Posterior vena cava (tissue), 2 donors: ENCODE measurements at regions of chr1 and their contacts with region 1.

Region 1: DNA sequence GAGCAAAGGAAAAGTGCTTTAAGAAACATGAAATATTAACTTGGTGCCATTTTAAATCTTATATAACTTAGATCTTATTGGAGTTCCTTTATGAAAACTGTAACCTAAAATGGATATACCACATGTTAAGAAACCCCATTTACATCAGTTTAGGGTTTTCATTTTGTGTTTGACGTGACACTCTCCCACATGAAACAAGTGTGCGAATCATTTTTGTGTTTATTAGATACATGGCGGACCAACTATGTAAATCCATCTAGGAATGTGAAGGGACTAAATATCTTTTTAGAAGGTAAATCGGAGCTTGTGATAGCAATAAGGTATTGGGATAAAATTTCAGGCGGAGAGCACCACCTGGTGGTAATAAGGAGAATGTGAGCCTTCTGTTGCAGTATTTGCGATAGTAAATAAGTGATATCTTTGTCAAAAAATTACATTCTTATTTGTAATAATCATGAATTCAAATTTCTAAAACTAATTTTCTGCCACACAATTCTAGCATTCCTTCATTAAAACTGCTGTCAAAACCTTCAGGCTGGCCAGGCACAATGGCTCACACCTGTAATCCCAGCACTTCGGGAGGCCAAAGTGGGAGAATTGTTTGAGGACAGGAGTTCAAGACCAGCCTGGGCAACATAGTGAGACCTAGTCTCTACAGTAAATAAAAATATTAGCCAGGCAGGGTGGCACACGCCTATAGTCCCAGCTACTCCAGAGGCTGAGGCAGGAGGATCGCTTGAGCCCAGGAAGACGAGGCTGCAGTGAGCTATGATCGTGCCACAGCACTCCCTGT is 31.3 kb downstream of the SMAP2 start:
- DNase-seq: no peak

Region 2: GRCh38 chr1:40003156-40004148 is 401.4 kb before region 1 on chr1:
- intact Hi-C with region 1: no loop called
- DNase-seq: no peak

Region 3: DNA sequence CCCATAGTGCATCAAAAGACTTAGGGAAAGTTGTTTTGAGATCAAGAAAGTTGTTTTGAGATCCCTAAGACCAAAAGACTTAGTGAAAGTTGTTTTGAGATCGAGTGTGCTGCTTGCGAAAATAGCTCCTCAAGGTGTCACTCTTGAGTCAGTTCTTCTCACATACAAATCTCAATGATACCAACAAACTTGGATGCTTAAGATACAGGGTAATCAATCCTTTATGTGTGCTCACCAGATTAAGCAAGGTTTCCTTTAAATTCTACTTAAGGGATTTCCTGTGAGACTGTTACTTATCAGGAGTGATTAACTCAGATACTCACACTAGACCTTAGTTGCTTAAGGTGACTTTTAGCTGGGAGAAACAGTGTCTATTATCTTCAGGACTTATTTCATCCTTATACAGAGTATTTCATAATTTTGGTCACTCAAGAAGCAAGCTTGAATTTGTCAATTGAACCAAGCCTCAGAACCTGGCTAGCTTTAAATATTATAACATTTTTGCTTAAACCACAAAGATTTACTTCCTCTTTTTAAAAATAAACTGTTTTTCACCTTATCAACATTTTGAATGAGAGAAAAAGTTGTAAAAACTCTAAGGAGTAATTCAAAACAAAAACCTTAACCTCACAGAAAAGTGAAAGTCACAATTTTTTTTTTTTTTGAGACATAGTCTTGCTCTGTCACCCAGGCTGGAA is 251.6 kb before region 1 on chr1:
- intact Hi-C with region 1: loop called in 1 of 2 experiments (anchors 5 kb)
- DNase-seq: no peak

Region 4: GRCh38 chr1:40344597-40344996 is 60.3 kb before region 1 on chr1:
- intact Hi-C with region 1: loop called in 1 of 2 experiments (anchors 10 kb)
- DNase-seq: peak; percentile 86

Region 5: DNA sequence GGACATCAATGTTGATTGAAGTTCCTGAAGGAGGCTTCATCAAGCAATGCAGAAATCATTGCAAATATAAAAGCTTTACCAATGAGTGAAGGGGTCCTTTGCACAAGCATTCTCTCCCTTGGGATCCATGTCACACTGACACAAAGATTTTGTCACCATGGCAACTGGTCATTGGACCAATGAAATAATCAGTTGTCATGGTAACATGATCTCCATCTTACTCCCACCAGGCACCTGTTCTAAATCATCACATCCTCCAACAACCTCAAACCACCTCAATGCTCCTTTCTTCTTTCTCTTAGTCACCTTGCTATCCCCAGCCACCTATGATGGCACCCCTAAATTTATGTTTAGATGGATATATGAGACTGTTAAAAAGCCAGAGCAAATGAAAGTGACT is 1943.6 kb after region 1 on chr1:
- intact Hi-C with region 1: no loop called
- DNase-seq: no peak